ENCODE measurements at regions of chr7 and their contacts with region 1.

Region 1: GRCh38 chr7:29194594-29195427 is at the start of gene CHN2:
- DNase-seq: peak; percentile 42
- H3K4me3 ChIP-seq: peak within 1 kb of the TSS; percentile 72 to 88 (median 74)
- H3K27ac ChIP-seq: no peak within 1 kb of the TSS
- H3K4me1 ChIP-seq: peaks cover 8% of the 10 kb centered on the region
- H3K27me3 ChIP-seq: peaks cover 18 to 33% of the 10 kb centered on the region in 2 experiments
- CTCF ChIP-seq: no peak
- POLR2A ChIP-seq: no peak
- total RNA-seq, gene CHN2: 3.2 and 5.0 TPM in 2 replicates

Region 2: DNA sequence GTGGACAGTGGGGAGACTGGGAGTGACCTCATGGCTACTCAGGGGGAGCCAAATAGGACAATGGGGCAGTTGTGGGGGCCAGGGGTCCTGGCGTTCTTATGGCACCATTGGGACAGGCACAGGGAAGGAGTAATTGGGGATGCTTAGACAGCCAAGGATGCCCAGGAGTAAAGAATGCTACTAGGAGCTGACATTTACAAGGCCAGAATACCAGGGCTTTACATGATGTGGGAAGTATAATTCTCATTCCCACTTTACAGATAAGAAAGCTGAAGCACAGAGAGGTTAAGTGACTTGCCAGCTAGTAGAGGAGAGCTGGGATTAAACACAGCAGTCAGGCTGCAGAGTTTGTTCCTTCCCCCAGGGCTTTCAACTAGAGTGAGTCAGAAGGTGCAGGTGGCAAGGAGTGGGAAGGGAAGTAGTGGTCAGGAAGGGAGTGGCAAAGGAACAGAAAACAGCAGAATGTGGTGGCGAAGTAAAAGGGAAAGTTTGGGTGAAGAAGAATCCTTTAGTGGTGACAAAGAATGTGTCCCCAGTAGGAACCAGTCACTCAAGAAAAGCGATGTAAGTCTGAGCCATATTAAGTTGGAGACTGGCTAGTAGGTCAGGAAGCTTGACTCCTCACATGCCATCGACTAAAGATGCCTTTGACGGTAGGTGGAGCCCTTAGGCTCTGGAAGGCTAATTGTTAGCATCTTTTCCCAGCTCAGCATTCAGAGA is 81.3 kb before region 1 on chr7:
- CTCF ChIA-PET with region 1: interaction called, 13 read pairs
- POLR2A ChIA-PET with region 1: no interaction called
- dilution Hi-C with region 1: no loop called
- intact Hi-C with region 1: loop called (anchors 2 kb)
- DNase-seq: peak; percentile 46
- H3K4me3 ChIP-seq: no peak overlapping the region
- H3K27ac ChIP-seq: no peak overlapping the region
- H3K4me1 ChIP-seq: peaks cover 16% of the 10 kb centered on the region
- H3K27me3 ChIP-seq: peaks cover 8 to 13% of the 10 kb centered on the region in 2 experiments
- CTCF ChIP-seq: peak; percentile 3 to 42
- POLR2A ChIP-seq: no peak

Region 3: DNA sequence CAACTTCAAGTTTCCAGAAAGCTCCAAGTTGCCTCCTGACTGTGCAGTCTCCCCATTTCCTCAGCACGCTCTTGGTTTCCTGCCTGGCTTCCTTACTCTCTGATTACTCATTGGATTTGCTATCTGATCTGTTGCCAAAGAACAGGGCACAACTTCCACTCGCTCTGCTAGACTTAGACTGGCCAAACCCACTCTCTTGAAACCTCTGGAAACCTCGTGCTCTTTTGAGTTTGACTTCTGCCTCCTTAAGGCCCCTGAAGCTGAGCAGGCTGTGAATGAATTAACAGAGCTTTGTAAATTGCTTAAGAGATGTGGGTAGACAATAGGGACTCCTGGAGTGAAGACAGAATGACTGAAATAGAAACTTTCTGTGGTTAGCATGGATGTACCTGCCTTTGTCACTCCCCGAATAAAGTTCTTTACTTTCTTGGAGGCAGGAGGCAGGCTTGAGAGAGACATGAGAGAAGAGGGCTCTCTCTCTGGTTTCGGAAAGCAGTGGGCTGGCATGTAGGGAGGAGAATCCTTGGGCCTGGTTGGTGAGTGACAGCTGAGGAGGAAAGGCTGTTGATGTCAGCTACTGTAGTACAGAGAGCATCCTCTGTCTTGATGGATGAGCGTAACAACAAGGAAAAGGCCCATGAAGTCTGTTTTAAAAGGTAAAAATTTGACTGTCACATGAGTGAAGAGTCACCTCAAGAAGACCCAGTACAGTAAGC is 70.6 kb after region 1 on chr7:
- CTCF ChIA-PET with region 1: interaction called, 3 read pairs
- POLR2A ChIA-PET with region 1: no interaction called
- dilution Hi-C with region 1: no loop called
- intact Hi-C with region 1: loop called (anchors 2 kb)
- DNase-seq: peak; percentile 94
- H3K4me3 ChIP-seq: no peak overlapping the region
- H3K27ac ChIP-seq: peak overlapping the region; percentile 89
- H3K4me1 ChIP-seq: peaks cover 16% of the 10 kb centered on the region
- H3K27me3 ChIP-seq: no peaks in the 10 kb centered on the region
- CTCF ChIP-seq: no peak
- POLR2A ChIP-seq: no peak

Region 4: GRCh38 chr7:29622335-29623265 is 427.8 kb after region 1 on chr7:
- CTCF ChIA-PET with region 1: no interaction called
- POLR2A ChIA-PET with region 1: no interaction called
- dilution Hi-C with region 1: no loop called
- intact Hi-C with region 1: no loop called
- DNase-seq: peak; percentile 91
- H3K4me3 ChIP-seq: no peak overlapping the region
- H3K27ac ChIP-seq: peak overlapping the region; percentile 53
- H3K4me1 ChIP-seq: peaks cover 6% of the 10 kb centered on the region
- H3K27me3 ChIP-seq: no peaks in the 10 kb centered on the region
- CTCF ChIP-seq: no peak
- POLR2A ChIP-seq: no peak